ENCODE measurements at regions of chr7 and their contacts with region 1.

Region 1: DNA sequence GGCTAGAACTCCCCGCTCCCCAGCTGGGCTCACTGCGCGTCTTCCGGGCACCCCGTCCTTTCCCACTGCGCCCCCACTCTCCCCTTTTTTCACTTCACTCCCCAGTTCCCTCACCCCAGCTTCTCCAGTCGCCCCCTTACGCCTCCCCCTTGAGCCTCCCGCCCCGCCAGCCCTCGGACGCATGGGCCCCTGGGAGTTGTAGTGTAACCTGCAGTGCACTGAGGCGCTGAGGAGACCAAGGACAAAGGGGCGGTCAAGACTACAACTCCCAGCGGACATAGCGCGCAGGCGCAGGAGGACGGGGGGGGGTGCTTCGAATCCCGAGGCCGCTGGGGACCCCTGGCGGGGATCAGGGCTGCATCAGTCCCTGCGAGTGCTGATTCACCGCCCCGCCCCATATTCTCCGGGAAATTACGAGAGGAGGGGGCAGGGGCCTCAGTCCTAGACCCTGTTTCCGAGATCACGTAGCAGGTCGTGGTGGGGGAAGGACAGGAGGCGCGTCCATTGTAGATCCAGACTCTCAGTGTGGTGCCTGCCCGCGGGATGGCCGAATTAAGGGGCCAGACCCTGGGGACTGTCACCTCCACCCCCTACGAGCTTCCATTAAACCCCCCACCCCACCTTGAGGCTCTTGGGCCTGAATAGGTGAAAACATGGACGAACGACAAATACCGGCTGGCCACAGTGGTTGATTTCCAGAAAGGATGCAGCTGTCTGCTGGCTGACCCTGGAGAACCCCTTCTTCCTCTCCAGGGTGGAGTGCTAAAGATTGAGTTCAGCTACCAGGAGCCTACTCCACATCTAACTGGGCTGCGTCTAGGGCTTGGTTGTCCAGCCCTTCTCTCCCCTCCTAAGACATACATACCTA is 554 bp upstream of the YWHAG start:
- DNase-seq: peak; percentile 98 to 99 (median 99)
- ATAC-seq: peak; percentile 94
- H3K4me3 ChIP-seq: peak overlapping the region; percentile 94
- H3K27ac ChIP-seq: peak overlapping the region; percentile 90
- H3K4me1 ChIP-seq: peaks cover 15 to 32% of the 10 kb centered on the region in 2 experiments
- H3K27me3 ChIP-seq: no peaks in the 10 kb centered on the region
- CTCF ChIP-seq: peak; percentile 88 to 94 (median 88)
- EP300 ChIP-seq: peak; percentile 70
- POLR2A ChIP-seq: peak; percentile 38
- RAD21 ChIP-seq: peak; percentile 75 to 88

Region 2: DNA sequence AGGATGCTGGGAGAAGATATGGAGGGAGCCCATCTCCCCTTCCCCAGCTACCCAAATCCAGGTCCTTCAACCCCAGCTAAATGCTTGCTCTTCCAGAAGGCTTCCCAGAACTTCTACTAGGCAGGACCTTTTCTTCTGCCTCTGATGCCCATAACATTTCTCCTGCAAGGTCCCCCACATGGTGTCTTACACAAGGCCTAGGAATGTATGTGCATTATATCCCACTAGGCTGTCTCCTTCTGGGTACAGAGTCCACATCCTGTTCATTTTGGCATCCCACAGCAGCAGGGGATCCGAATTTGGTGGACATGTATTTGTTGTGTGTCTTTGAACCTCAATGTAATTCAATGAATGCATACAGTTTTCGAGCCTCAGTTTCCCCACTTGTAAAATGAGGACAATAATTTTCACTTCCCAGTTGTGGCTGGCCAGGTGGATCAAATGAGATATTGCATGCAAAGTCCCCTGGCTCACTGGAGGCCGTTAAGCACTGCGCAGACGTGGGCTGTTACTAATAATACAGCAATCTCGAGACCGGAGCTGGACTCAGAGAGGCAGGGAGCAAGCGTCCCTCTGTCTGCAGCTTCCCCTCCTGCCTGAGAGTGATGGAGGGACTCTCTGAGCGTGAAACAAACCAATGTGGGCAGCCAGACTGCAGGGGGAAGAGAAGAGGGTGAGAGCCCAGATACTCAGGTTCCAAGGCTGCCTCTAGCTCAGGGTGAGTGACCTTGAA is 18.0 kb after region 1 on chr7:
- CTCF ChIA-PET with region 1: no interaction called
- POLR2A ChIA-PET with region 1: interaction called, 10 read pairs
- in situ Hi-C with region 1: no loop called
- intact Hi-C with region 1: no loop called
- DNase-seq: no peak
- ATAC-seq: no peak
- H3K4me3 ChIP-seq: no peak overlapping the region
- H3K27ac ChIP-seq: no peak overlapping the region
- H3K4me1 ChIP-seq: peaks cover 48% of the 10 kb centered on the region in 2 experiments
- H3K27me3 ChIP-seq: no peaks in the 10 kb centered on the region
- CTCF ChIP-seq: no peak
- EP300 ChIP-seq: no peak
- POLR2A ChIP-seq: no peak
- RAD21 ChIP-seq: no peak

Region 3: DNA sequence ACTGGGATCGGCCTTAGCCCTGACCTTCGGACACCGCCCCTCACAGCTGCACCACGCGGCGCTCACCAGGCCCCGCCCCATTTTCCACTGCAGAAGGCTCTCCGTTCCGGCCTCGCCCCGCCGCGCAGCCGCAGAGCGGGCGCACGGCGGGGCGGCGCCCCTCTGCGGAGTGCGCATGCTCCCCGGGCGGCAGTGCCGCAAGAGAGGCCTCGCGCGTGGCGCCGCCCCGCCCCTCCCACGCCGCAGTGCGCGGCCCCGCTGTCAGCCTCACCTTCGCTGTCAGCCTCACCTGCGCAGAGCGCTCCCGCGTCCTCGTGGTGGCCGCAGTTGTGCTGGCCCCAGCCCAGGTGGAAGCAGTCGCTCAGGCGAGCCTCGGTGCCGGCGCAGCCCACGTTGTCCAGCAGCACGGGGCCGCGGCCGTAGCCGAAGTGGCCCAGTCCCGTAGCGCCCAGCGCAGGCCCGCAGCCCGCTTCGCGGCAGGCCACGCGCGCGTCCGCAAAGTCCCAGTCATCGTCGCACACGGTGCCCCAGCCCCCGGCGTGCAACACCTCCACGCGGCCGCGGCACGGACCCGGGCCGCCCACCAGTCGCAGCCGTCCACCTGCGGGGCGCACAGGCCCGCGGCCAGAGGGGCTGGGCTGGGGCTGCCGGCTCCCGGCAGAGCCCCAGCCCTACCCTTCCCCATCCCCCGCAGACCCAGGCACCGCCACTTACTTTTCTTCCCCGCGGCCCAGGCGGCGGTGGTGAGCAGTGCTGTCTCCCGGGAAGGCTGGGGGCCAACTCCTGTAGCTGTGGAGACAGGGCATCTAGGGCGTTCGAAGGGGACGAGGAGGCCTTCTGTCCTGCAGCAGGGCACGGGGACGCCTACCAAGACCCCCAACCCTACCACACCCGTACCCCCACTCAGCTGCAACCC is 34.0 kb after region 1 on chr7:
- CTCF ChIA-PET with region 1: interaction called, 4 read pairs
- POLR2A ChIA-PET with region 1: interaction called, 8 read pairs
- in situ Hi-C with region 1: no loop called
- intact Hi-C with region 1: loop called (anchors 2 kb)
- DNase-seq: peak; percentile 98 to 99 (median 99)
- ATAC-seq: peak; percentile 84
- H3K4me3 ChIP-seq: peak overlapping the region; percentile 53
- H3K27ac ChIP-seq: peak overlapping the region; percentile 96
- H3K4me1 ChIP-seq: peaks cover 51 to 74% of the 10 kb centered on the region in 2 experiments
- H3K27me3 ChIP-seq: no peaks in the 10 kb centered on the region
- CTCF ChIP-seq: no peak
- EP300 ChIP-seq: no peak
- POLR2A ChIP-seq: peak; percentile 86
- RAD21 ChIP-seq: no peak

Measured in K562 (cell line).